Activated CD8-positive, alpha-beta T cell treated with anti-CD3 and anti-CD28 coated beads, Interleukin-2, amount 10 ng/mL, durations not matched to agents 7 days and 5 days (primary cell): ENCODE measurements at regions of chr16 and their contacts with region 1.

Region 1: DNA sequence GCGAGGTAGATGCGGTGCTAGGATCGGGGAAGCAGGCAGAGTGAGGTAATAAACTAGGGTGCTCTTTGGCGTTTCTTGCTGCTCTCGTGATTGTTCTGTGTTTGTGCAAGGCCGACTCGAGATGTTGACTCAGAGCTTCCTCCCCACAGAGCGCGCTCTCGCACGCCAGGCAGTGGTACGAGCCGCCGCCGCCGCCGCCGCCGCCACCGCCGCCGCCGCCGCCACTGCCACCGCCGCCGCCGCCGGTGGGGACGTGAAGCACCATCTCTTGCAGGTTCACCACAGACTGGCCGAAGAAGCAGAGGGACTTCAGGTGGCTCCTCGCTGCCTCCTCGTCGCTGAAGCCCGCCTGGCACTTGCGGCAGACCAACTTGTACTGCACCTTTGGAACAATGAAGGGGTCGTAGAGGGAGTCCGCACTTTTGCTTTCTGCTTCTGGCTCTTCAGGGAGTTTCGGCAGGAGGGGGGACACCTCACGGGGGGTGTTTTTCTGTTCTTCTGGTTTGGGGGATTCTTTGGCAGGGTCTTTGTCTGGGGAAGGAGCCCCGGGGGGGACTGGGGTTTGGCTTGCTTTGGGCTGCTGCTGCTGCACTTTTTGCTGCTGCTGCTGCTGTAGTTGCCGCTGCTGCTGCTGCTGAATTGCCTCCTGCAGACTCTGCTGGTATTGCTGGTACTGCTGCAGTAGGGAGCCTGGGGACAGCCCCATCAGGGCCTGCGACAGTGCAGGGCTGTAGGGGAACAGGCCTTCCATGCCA is 260.2 kb downstream of the ZFHX3 start:
- DNase-seq: peak; percentile 83
- ATAC-seq: peak; percentile 96
- H3K4me3 Mint-ChIP-seq: peak overlapping the region; percentile 76
- H3K27ac Mint-ChIP-seq: peak overlapping the region; percentile 88
- H3K4me1 Mint-ChIP-seq: peaks cover 37% of the 10 kb centered on the region
- H3K27me3 Mint-ChIP-seq: peaks cover 30% of the 10 kb centered on the region

Region 2: GRCh38 chr16:72856797-72857196 is 69.1 kb after region 1 on chr16:
- CTCF ChIA-PET with region 1: interaction called, 13 read pairs
- POLR2A ChIA-PET with region 1: no interaction called
- DNase-seq: peak; percentile 60
- ATAC-seq: peak; percentile 78
- H3K4me3 Mint-ChIP-seq: no peak overlapping the region
- H3K27ac Mint-ChIP-seq: no peak overlapping the region
- H3K4me1 Mint-ChIP-seq: peaks cover 40% of the 10 kb centered on the region
- H3K27me3 Mint-ChIP-seq: peaks cover 12% of the 10 kb centered on the region